Left ventricle myocardium inferior (tissue), 1 donor: ENCODE measurements at regions of chr1 and their contacts with region 1.

Region 1: GRCh38 chr1:210292231-210292871 is 36.4 kb upstream of the HHAT start:
- DNase-seq: peak; percentile 64
- H3K4me3 ChIP-seq: peak overlapping the region; percentile 63
- H3K27ac ChIP-seq: peak overlapping the region; percentile 75
- H3K4me1 ChIP-seq: peaks cover 52% of the 10 kb centered on the region
- H3K27me3 ChIP-seq: peaks cover 6% of the 10 kb centered on the region
- CTCF ChIP-seq: peak; percentile 54

Region 2: DNA sequence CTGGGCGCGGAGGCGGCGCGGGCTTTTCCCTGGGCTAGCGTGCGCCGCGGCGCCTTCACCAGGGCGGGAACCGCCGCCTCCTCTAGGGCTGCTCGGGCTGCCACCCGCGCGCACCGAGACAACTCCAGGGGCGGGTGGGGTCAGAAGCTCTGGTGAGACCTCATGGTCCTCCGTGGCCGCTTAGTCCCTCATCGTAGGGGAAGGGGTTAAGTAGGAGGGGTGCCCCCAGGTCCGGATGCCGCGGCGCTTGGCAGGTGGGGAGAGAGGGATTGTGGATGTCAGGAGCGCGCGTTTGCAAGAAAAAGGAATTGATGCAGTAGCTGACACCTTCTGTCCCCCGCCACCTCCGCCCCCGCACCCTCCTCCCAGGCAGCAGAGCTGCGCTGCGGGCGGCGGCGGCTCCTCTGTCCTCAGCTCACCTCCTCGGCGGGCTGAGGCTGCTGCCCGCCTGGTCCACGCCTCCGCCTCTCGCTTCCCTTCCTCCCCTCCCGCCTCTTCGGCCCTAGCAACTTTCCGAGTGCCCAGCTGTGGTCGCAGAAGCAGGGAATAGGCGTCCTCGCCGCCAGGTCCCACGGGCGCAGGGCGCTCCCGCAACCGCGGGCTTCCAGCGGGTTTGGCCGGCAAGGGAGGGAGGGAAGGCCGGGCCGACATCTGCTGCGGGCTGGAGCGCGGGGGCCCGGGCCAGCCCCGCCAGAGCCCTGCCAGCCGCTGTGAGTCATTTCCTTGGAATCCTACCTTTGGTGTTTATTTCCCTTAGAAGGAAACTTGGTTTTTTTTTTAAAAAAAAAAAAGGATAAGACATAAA is 58.9 kb before region 1 on chr1:
- intact Hi-C with region 1: loop called (anchors 10 kb)
- DNase-seq: peak; percentile 37
- H3K4me3 ChIP-seq: peak overlapping the region; percentile 82
- H3K27ac ChIP-seq: peak overlapping the region; percentile 91
- H3K4me1 ChIP-seq: peaks cover 55% of the 10 kb centered on the region
- H3K27me3 ChIP-seq: peaks cover 16% of the 10 kb centered on the region
- CTCF ChIP-seq: no peak